ENCODE measurements at regions of chr7 and their contacts with region 1.

Region 1: GRCh38 chr7:26200444-26201246 is at the start of gene HNRNPA2B1:
- DNase-seq: peak; percentile 98
- H3K4me3 Mint-ChIP-seq: peak within 1 kb of the TSS; percentile 94
- H3K27ac Mint-ChIP-seq: peak within 1 kb of the TSS; percentile 98
- H3K4me1 Mint-ChIP-seq: peaks cover 41% of the 10 kb centered on the region
- H3K27me3 Mint-ChIP-seq: no peaks in the 10 kb centered on the region
- total RNA-seq, gene HNRNPA2B1: 696 to 705 TPM

Region 2: DNA sequence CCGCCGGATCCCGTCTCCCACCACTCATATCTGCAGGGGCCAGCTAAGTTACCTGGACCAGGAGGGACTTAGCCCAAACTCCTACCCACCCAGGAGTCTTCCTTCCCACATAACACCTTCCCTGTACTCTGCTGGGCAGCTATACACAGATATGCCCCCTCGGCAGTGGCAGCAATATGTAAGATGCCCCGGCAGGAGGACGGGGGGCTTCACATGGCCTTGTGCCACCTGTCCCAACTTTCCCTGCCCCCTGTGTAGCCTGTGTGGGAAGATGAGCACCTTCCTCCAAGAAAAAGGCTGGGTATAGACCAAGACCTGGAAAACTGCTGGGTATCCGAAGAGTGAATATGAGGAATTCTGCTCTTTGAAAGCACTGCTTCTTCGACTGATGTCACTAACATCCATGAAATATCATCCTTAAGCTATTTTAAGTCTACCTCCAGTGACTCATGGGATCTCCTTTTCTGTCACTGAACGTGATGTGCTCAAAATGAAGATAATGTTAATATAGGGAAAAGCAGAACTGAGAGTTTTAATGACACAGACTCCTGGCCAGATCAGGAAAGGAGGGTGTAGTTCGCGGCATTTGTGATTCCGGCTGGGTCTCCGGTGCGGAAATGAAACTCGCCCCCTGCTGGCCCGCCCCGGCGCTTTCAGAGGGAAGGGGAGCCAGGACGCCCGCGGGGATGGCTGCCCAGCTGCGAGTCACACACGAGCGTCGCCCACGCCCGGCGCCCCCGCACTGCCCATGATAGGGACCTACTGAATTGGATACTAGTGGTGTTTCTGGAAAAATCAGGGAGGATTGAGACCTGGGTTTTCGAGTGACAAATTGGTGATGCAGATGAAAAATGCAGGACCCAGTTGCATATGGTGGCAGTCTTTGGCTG is 305.5 kb before region 1 on chr7:
- CTCF ChIA-PET with region 1: interaction called, 11 read pairs
- POLR2A ChIA-PET with region 1: interaction called, 6 read pairs
- DNase-seq: peak; percentile 62
- H3K4me3 Mint-ChIP-seq: no peak overlapping the region
- H3K27ac Mint-ChIP-seq: no peak overlapping the region
- H3K4me1 Mint-ChIP-seq: peaks cover 28% of the 10 kb centered on the region
- H3K27me3 Mint-ChIP-seq: peaks cover 4% of the 10 kb centered on the region

Region 3: DNA sequence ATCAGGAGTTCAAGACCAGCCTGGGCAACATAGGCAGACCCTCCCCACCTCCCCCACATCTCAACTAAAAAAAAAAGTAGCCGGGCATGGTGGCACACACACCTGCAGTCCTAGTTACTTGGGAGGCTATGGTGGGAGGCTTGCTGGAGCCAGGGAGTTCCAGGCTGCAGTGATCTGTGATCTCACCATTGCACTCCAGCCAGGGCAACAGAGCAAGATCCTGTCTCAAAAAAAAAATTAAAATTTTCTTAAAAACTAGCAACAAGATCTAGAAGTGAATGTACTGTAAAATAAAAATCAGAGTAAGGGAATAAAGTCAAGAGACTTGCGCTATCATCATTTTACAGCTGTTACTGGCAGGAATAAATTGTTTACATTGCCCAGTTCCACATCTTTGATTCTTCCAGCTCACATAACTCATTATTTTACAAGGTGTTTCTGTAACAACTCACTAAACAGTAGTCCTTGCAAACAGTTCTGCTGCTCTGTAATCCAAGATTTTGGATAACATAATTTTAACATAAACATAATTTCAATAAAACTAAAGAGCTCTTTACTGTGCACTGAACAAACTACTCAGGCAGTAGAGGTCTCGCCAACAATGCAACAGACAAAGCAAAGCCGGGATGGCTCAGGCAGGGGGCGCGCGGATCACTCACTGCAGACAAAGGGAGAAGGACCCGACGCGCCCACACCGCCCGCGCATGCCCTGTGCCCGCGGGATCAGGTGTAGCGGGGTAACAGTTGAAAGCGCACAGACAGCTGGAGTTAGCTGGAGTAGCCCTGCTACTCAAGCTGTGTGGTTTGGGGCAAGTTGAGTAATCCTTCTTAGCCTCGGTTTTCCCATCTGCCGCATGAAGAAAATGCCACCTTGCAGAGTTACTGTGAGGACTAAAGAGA is 122.0 kb before region 1 on chr7:
- CTCF ChIA-PET with region 1: interaction called, 11 read pairs
- POLR2A ChIA-PET with region 1: interaction called, 5 read pairs
- DNase-seq: peak; percentile 73
- H3K4me3 Mint-ChIP-seq: no peak overlapping the region
- H3K27ac Mint-ChIP-seq: no peak overlapping the region
- H3K4me1 Mint-ChIP-seq: peaks cover 5% of the 10 kb centered on the region
- H3K27me3 Mint-ChIP-seq: peaks cover 71% of the 10 kb centered on the region

Region 4: DNA sequence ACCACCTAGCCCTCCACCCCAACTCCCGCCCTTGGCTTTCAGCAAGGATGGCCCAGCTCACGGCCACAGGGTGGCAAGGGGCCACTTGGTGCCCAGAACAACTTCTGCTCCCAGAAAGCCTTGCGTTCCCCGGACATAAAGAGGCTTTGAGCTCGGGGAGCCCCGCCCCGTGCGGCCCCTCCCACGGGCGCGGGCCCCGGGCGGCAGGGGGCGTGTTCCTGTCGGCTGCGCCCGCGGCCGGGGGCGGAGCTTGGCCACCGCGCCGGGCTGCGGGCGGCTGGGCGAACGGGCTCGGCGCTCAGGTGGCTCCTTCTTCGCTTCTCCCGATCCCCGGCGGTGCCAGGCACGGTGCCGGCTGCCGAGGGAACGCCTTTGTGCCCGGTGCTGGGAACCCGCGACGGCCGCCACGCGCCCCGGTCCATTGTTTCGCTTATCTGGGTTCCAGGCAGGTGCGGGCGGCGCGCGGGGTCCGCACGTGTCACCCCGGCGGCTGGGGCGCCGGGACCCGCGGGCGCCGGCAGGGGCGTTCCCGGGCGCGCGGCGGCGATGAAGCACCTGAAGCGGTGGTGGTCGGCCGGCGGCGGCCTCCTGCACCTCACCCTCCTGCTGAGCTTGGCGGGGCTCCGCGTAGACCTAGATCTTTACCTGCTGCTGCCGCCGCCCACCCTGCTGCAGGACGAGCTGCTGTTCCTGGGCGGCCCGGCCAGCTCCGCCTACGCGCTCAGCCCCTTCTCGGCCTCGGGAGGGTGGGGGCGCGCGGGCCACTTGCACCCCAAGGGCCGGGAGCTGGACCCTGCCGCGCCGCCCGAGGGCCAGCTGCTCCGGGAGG is 48.5 kb before region 1 on chr7 and contains the start of gene NFE2L3:
- CTCF ChIA-PET with region 1: interaction called, 9 read pairs
- POLR2A ChIA-PET with region 1: interaction called, 406 read pairs
- DNase-seq: peak; percentile 88
- H3K4me3 Mint-ChIP-seq: peak within 1 kb of the TSS; percentile 94
- H3K27ac Mint-ChIP-seq: peak within 1 kb of the TSS; percentile 97
- H3K4me1 Mint-ChIP-seq: peaks cover 55% of the 10 kb centered on the region
- H3K27me3 Mint-ChIP-seq: no peaks in the 10 kb centered on the region
- total RNA-seq, gene NFE2L3: 21.5 to 24.0 TPM

Region 5: GRCh38 chr7:26187380-26188205 is 13.1 kb before region 1 on chr7:
- CTCF ChIA-PET with region 1: interaction called, 16 read pairs
- POLR2A ChIA-PET with region 1: interaction called, 217 read pairs
- DNase-seq: no peak
- H3K4me3 Mint-ChIP-seq: no peak overlapping the region
- H3K27ac Mint-ChIP-seq: peak overlapping the region; percentile 63
- H3K4me1 Mint-ChIP-seq: peaks cover 78% of the 10 kb centered on the region
- H3K27me3 Mint-ChIP-seq: no peaks in the 10 kb centered on the region

Region 6: GRCh38 chr7:26284995-26285632 is 84.5 kb after region 1 on chr7:
- CTCF ChIA-PET with region 1: interaction called, 9 read pairs
- POLR2A ChIA-PET with region 1: interaction called, 46 read pairs
- DNase-seq: peak; percentile 26
- H3K4me3 Mint-ChIP-seq: no peak overlapping the region
- H3K27ac Mint-ChIP-seq: no peak overlapping the region
- H3K4me1 Mint-ChIP-seq: peaks cover 4% of the 10 kb centered on the region
- H3K27me3 Mint-ChIP-seq: peaks cover 7% of the 10 kb centered on the region

Region 7: DNA sequence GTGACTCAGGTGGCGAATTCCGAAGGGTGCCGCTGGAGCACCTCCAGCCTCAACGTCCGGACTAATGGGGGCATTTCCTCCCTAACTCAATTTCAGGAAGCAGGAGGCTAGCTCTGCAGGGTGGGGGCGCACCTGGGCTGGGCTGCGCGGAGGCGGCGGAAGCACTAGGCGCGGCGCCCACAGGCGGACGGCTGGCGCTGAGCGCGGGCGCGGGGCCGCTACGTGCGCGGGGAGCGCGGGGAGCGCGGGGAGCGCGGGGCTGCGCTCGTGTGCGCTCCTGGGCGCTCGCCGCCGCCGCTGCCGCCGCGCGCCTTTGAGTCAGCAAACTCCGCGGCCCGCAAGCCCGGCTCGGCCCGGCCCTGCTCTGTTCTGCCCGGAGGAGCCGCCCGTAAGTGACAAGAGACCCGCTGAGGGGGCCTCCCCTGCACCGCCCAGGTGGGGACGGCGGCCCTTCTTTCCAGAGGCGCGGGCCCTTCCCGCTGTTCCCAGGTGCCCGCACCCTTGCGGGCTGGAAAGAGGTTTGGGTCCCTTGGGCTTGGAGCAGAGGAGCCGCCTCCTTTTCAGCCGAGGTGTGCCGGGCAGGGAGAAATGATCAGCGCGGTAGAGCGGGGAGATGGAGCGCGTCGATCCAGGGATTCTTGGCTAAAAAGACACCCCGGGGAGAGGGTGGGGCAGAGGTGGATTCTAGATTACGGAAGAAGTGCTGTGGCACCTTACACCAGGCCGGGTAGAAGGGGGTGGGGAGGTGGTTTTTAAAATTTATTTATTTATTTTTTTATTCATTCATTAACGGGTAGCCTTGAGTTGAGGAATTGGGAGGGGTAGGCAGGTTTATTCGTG is 91.3 kb after region 1 on chr7 and contains the start of gene SNX10:
- CTCF ChIA-PET with region 1: interaction called, 4 read pairs
- POLR2A ChIA-PET with region 1: interaction called, 96 read pairs
- DNase-seq: peak; percentile 78
- H3K4me3 Mint-ChIP-seq: peak within 1 kb of the TSS; percentile 96
- H3K27ac Mint-ChIP-seq: peak within 1 kb of the TSS; percentile 90
- H3K4me1 Mint-ChIP-seq: peaks cover 39% of the 10 kb centered on the region
- H3K27me3 Mint-ChIP-seq: peaks cover 4% of the 10 kb centered on the region
- total RNA-seq, gene SNX10: 42.4 to 45.7 TPM

Measured in activated CD4-positive, alpha-beta memory T cell treated with anti-CD3 and anti-CD28 coated beads, Interleukin-2, amount 10 ng/mL, durations not matched to agents 7 days and 5 days (primary cell).